Right ventricle myocardium inferior (tissue), 1 donor: ENCODE measurements at regions of chrX and their contacts with region 1.

Region 1: DNA sequence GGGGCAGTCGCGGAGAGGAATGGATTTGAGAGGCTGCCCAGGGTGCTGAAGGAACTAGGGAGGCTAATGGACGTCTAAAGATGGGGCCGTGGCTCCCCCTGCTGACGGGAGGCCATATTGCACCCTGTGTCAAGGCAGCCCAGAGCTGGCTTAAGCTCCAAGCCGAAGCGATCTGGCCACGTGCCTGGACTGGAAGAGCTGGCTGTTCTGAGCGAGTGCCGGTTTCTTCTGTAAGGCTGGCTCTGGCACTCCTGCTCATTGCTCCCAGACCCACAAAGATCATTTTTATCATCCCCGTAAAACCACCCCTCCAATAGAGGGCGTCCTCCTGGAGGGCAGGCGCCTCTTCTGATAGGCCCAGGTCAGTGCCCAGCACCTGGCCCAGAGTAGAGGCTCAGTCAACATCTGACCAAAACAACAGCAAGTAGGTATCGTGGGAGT is 5.6 kb downstream of the PNCK start:
- DNase-seq: peak; percentile 90
- ATAC-seq: peak; percentile 90

Region 2: GRCh38 chrX:152958524-152959465 is 709.2 kb before region 1 on chrX:
- intact Hi-C with region 1: loop called (anchors 5 kb)
- DNase-seq: peak; percentile 92
- ATAC-seq: peak; percentile 99

Region 3: DNA sequence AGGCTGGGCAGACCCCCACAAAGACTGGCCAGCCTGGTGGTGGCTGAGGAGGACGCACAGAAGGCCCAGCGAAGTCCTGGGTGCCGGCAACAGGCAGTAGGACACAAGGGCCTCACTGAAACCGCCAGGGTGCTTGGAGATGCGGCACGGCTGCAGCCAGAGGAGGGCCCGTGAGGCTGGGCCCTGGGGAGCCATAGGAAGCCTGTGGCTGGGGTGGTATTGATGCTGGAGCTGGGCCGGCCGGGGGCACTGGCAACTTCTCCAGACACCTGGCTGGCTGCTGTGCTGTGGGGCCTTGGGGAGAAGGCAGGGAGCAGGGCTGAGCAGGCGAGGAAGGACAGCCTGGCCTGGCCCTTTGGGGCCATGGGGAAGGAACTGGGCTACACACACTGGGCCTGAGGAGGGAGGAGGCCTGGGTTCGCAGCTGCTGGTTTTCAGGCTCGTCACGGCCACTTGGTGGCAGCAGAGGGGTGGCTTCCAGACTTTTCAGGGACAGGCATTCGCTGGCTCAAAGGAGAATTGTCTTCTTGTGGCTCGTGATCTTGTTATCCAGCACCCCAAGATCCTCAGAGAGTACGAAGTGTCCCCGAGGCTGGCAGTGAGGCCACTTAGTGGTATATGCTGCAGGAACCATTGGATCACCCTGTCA is 113.3 kb before region 1 on chrX:
- intact Hi-C with region 1: loop called (anchors 5 kb)
- DNase-seq: peak; percentile 75
- ATAC-seq: peak; percentile 65

Region 4: GRCh38 chrX:153609917-153610428 is 58.0 kb before region 1 on chrX:
- intact Hi-C with region 1: loop called (anchors 5 kb)
- DNase-seq: peak; percentile 88
- ATAC-seq: peak; percentile 93

Region 5: DNA sequence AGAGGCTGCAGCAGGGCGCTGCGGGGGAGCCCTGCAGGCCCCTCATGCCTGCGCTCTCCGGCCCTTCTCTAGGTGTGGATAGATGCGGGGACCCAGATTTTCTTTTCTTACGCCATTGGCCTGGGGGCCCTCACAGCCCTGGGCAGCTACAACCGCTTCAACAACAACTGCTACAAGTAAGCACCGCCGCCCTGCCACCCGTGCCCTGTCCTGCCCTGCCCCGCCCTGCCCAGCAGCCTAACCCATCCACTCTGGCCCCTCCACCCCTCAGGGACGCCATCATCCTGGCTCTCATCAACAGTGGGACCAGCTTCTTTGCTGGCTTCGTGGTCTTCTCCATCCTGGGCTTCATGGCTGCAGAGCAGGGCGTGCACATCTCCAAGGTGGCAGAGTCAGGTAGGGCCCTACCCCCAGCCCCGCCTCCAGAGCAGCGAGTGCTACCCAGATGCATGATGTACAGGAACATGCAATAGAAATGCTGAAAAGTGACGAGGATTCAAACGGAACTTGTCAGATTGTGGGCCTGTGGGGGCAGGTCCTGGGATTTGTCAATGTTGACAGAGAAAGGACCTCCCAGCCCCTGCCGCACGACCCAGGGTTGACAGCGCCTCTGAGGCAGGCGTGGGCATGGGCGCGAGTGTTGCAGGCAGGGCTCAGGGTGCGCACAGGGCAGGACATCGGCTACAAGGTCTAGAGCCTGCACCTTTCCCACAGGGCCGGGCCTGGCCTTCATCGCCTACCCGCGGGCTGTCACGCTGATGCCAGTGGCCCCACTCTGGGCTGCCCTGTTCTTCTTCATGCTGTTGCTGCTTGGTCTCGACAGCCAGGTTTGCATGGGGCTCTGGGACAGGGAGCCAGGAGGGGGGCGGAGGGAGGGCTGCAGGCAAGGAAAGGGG is 25.5 kb after region 1 on chrX:
- intact Hi-C with region 1: no loop called
- DNase-seq: no peak
- ATAC-seq: no peak

Region 6: DNA sequence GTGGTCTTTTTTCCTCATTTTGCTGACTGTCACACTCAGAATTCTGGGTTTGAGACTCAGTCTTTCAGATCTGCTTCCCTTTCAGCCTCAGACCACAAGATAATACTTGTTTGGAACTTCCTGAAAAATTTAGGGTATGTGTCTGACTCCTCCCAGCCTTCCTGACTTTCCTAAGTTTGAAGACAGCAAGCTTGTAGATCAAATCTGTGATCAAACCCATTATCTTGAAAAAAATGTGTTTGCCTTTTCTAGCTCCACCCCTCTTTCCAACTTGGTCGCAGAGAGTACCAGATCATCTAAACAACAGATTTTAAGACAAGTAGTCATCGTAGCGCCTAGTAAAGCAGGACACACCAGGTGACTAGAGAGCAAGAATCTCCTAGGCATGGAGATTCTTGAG is 46.3 kb after region 1 on chrX:
- intact Hi-C with region 1: no loop called
- DNase-seq: no peak
- ATAC-seq: no peak